ENCODE measurements at regions of chr3 and their contacts with region 1.

Region 1: DNA sequence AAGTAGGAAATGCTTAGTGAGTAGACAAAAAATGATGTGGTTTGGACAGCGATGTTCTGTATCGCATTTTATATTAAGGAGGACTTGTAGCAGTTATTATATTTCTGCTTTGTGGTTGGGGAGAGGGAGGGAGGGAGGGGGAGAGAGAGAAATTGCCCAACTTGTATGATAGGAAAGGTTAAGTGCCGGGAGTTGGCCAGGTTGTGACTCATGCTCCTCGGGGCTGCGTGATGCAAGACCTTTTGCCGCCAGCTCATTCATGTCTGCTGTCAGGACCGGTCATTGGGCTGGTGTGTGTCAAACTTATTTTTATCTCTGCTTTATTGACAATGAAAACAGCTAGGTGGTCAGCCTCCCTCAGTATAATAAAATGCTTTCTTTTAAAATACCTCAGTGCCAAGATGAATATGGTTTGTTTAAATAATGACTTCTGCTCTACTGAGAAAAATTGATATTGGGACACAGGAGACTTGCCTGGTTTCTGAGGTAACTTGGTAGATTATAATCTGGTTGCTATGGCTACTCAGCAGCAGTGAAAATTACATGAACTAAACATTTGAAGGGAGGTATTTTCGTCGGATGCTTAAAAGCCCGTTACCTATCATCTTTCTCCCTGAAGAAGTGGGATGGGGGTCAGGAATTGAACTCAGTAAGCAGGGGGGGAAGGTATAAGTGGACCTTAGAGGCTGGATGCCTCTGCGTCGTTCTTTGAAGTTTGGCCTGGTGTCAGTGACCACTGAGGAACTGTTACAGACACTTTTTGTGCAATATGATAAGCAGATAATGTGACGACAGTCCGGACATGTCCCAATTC is 90.7 kb downstream of the FNDC3B start:
- DNase-seq: no peak
- ATAC-seq: peak; percentile 12; the same call in 1 of the 3 replicates
- H3K4me3 ChIP-seq: no peak overlapping the region
- H3K27ac ChIP-seq: no peak overlapping the region
- H3K4me1 ChIP-seq: peaks cover 29% of the 10 kb centered on the region
- H3K27me3 ChIP-seq: no peaks in the 10 kb centered on the region
- CTCF ChIP-seq: no peak
- EP300 ChIP-seq: no peak
- POLR2A ChIP-seq: no peak
- RAD21 ChIP-seq: no peak

Region 2: DNA sequence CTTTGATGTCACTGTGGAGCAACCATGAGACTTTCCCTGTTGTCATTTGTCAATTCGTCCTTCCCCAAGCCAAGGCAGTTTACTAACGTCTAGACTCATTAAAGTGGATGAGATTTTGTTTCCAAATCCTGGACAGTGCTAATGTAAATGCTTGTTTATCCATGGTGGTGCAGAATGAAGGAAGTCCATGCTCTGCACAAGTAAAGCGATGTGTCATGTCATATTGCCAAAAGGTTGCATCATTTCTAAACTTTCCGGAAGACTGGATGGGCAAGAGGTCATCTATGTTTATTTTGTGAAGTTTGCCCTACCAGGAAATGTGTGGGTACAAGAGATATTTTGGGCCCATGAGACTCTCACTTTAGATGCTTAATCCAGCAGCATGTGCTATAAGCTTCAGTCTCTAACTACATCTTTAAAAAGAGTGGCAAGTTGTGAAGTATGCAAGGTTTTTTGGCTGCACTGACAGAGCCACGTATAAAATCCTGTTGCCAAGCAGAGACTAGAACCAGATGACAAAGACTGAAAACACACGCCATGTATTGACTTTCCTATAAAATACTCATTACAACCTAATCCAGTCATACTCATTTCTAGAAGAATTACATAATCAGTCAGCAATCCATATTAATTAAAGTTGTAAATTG is 162.8 kb before region 1 on chr3:
- CTCF ChIA-PET with region 1: no interaction called
- POLR2A ChIA-PET with region 1: no interaction called
- RAD21 ChIA-PET with region 1: no interaction called
- SMC1A ChIA-PET with region 1: no interaction called
- in situ Hi-C with region 1: no loop called
- intact Hi-C with region 1: no loop called
- DNase-seq: no peak
- ATAC-seq: peak; percentile 26; the same call in 2 of the 3 replicates
- H3K4me3 ChIP-seq: no peak overlapping the region
- H3K27ac ChIP-seq: no peak overlapping the region
- H3K4me1 ChIP-seq: no peaks in the 10 kb centered on the region
- H3K27me3 ChIP-seq: no peaks in the 10 kb centered on the region
- CTCF ChIP-seq: no peak
- EP300 ChIP-seq: no peak
- POLR2A ChIP-seq: no peak
- RAD21 ChIP-seq: no peak

Region 3: GRCh38 chr3:172115787-172116186 is 14.3 kb before region 1 on chr3:
- CTCF ChIA-PET with region 1: interaction called, 5 read pairs
- POLR2A ChIA-PET with region 1: interaction called, 3 read pairs
- RAD21 ChIA-PET with region 1: interaction called, 4 read pairs
- SMC1A ChIA-PET with region 1: interaction called, 12 read pairs
- in situ Hi-C with region 1: no loop called
- intact Hi-C with region 1: no loop called
- DNase-seq: no peak
- ATAC-seq: no peak
- H3K4me3 ChIP-seq: no peak overlapping the region
- H3K27ac ChIP-seq: no peak overlapping the region
- H3K4me1 ChIP-seq: no peaks in the 10 kb centered on the region
- H3K27me3 ChIP-seq: no peaks in the 10 kb centered on the region
- CTCF ChIP-seq: no peak
- EP300 ChIP-seq: no peak
- POLR2A ChIP-seq: no peak
- RAD21 ChIP-seq: no peak

Region 4: GRCh38 chr3:172145031-172145686 is 15.1 kb after region 1 on chr3:
- CTCF ChIA-PET with region 1: interaction called, 27 read pairs
- POLR2A ChIA-PET with region 1: interaction called, 8 read pairs
- RAD21 ChIA-PET with region 1: interaction called, 71 read pairs
- SMC1A ChIA-PET with region 1: interaction called, 254 read pairs
- in situ Hi-C with region 1: no loop called
- intact Hi-C with region 1: loop called (anchors 2 kb)
- DNase-seq: peak; percentile 60
- ATAC-seq: peak; percentile 57
- H3K4me3 ChIP-seq: no peak overlapping the region
- H3K27ac ChIP-seq: peak overlapping the region; percentile 48
- H3K4me1 ChIP-seq: peaks cover 66% of the 10 kb centered on the region
- H3K27me3 ChIP-seq: no peaks in the 10 kb centered on the region
- CTCF ChIP-seq: no peak
- EP300 ChIP-seq: peak in 1 of 2 experiments; percentile 8; a peak in 1 of 4 replicates
- POLR2A ChIP-seq: no peak
- RAD21 ChIP-seq: no peak; the same call in 1 of the 2 replicates

Region 5: DNA sequence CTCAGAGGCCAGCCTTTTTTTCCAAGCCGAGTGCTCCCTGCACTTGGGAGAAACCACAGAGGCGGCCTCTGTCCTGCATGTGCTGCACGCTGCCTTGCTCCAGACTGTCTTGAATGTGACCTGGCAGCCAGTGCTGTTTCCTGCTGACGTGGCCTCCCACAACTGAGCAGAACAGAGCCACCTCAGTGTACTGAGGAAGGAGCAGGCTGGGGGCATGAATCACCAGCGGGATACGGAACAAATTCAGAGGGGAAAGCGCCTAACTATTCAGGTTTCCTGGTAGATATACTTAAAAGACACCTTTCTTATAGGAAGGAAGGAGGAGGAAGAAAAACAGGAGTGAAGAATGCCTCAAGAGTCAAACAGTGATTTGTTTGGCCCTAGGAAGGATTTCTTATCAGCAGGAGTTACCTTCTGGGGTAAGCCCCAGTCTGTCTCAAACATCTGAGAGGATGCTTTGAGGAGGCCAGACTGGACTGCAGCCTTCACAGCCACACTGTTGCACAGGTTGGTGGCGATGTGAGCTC is 23.3 kb after region 1 on chr3:
- CTCF ChIA-PET with region 1: interaction called, 5 read pairs
- POLR2A ChIA-PET with region 1: interaction called, 5 read pairs
- RAD21 ChIA-PET with region 1: interaction called, 71 read pairs
- SMC1A ChIA-PET with region 1: interaction called, 254 read pairs
- in situ Hi-C with region 1: no loop called
- intact Hi-C with region 1: loop called (anchors 1 kb)
- DNase-seq: no peak
- ATAC-seq: peak; percentile 72
- H3K4me3 ChIP-seq: peak overlapping the region; percentile 22; the same call in 1 of the 2 replicates
- H3K27ac ChIP-seq: peak overlapping the region; percentile 78
- H3K4me1 ChIP-seq: peaks cover 25% of the 10 kb centered on the region
- H3K27me3 ChIP-seq: no peaks in the 10 kb centered on the region
- CTCF ChIP-seq: no peak
- EP300 ChIP-seq: no peak
- POLR2A ChIP-seq: no peak; the same call in 1 of the 2 replicates
- RAD21 ChIP-seq: no peak

Region 6: DNA sequence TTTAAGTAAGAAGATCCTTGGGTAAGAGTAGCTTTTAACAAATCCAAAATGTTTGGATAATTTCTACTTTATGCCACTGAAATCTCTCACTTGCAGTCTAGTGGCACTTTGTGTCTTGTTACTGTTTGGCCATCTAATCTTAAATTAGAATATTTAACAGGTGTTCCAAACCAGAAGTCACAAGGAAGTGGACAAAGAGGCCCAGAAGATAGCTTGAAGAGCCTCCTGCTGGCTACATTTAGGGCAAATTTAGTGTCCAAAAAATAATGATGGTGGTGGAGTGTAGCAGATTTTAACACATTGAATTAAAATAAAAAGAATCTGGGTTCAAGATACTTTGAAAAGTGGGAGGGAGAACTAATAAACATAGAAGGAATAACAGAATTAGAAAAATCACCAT is 146.0 kb after region 1 on chr3:
- CTCF ChIA-PET with region 1: interaction called, 5 read pairs
- POLR2A ChIA-PET with region 1: no interaction called
- RAD21 ChIA-PET with region 1: interaction called, 3 read pairs
- SMC1A ChIA-PET with region 1: interaction called, 15 read pairs
- in situ Hi-C with region 1: no loop called
- intact Hi-C with region 1: no loop called
- DNase-seq: no peak
- ATAC-seq: peak; percentile 36; the same call in 1 of the 3 replicates
- H3K4me3 ChIP-seq: no peak overlapping the region
- H3K27ac ChIP-seq: no peak overlapping the region
- H3K4me1 ChIP-seq: peaks cover 12% of the 10 kb centered on the region
- H3K27me3 ChIP-seq: no peaks in the 10 kb centered on the region
- CTCF ChIP-seq: peak in 2 of 3 experiments; percentile 15 to 33; a peak in 4 of 6 replicates
- EP300 ChIP-seq: no peak
- POLR2A ChIP-seq: no peak
- RAD21 ChIP-seq: peak; percentile 61

Measured in GM12878 (cell line).